Caco-2 (cell line): ENCODE measurements at regions of chr1 and their contacts with region 1.

Region 1: GRCh38 chr1:206912445-206913095 is 9.2 kb downstream of the FCMR start:
- DNase-seq: peak; percentile 82 to 83
- H3K4me3 ChIP-seq: no peak overlapping the region
- H3K4me3 Mint-ChIP-seq: no peak overlapping the region
- H3K27ac Mint-ChIP-seq: no peak overlapping the region
- H3K4me1 ChIP-seq: 0 out of 2 replicates have a peak, but pooled peaks cover 3% of the 10 kb centered on the region
- H3K4me1 Mint-ChIP-seq: peaks cover 12% of the 10 kb centered on the region
- H3K27me3 ChIP-seq: peaks cover 2% of the 10 kb centered on the region; the same call in 1 of the 2 replicates
- H3K27me3 Mint-ChIP-seq: peaks cover 20% of the 10 kb centered on the region
- CTCF ChIP-seq: peak; percentile 75 to 81

Region 2: GRCh38 chr1:206635080-206635977 is 277.2 kb before region 1 on chr1 and contains the start of gene DYRK3:
- CTCF ChIA-PET with region 1: interaction called, 9 read pairs
- POLR2A ChIA-PET with region 1: no interaction called
- intact Hi-C with region 1: loop called (anchors 1 kb)
- DNase-seq: peak; percentile 89 to 90
- H3K4me3 ChIP-seq: peak within 1 kb of the TSS; percentile 86
- H3K4me3 Mint-ChIP-seq: peak within 1 kb of the TSS; percentile 78
- H3K27ac Mint-ChIP-seq: peak within 1 kb of the TSS; percentile 74
- H3K4me1 ChIP-seq: no peaks in the 10 kb centered on the region
- H3K4me1 Mint-ChIP-seq: peaks cover 7% of the 10 kb centered on the region
- H3K27me3 ChIP-seq: no peaks in the 10 kb centered on the region; the same call in 1 of the 2 replicates
- H3K27me3 Mint-ChIP-seq: no peaks in the 10 kb centered on the region
- CTCF ChIP-seq: no peak
- total RNA-seq, gene DYRK3: 0.16 TPM in 1 of 2 replicates, not detected in the other

Region 3: GRCh38 chr1:206734499-206735142 is 177.9 kb before region 1 on chr1:
- CTCF ChIA-PET with region 1: interaction called, 22 read pairs
- POLR2A ChIA-PET with region 1: no interaction called
- intact Hi-C with region 1: loop called (anchors 1 kb)
- DNase-seq: peak in 1 of 2 experiments; percentile 75
- H3K4me3 ChIP-seq: no peak overlapping the region
- H3K4me3 Mint-ChIP-seq: no peak overlapping the region
- H3K27ac Mint-ChIP-seq: no peak overlapping the region
- H3K4me1 ChIP-seq: no peaks in the 10 kb centered on the region
- H3K4me1 Mint-ChIP-seq: peaks cover 21% of the 10 kb centered on the region
- H3K27me3 ChIP-seq: no peaks in the 10 kb centered on the region
- H3K27me3 Mint-ChIP-seq: no peaks in the 10 kb centered on the region
- CTCF ChIP-seq: peak; percentile 84 to 85

Region 4: GRCh38 chr1:206808615-206809014 is 104.0 kb before region 1 on chr1:
- CTCF ChIA-PET with region 1: interaction called, 22 read pairs
- POLR2A ChIA-PET with region 1: no interaction called
- intact Hi-C with region 1: loop called (anchors 1 kb)
- DNase-seq: peak; percentile 46 to 57
- H3K4me3 ChIP-seq: no peak overlapping the region
- H3K4me3 Mint-ChIP-seq: no peak overlapping the region
- H3K27ac Mint-ChIP-seq: no peak overlapping the region
- H3K4me1 ChIP-seq: no peaks in the 10 kb centered on the region
- H3K4me1 Mint-ChIP-seq: no peaks in the 10 kb centered on the region
- H3K27me3 ChIP-seq: no peaks in the 10 kb centered on the region
- H3K27me3 Mint-ChIP-seq: no peaks in the 10 kb centered on the region
- CTCF ChIP-seq: peak; percentile 48 to 59

Region 5: GRCh38 chr1:206828765-206829164 is 83.8 kb before region 1 on chr1:
- CTCF ChIA-PET with region 1: no interaction called
- POLR2A ChIA-PET with region 1: interaction called, 10 read pairs
- intact Hi-C with region 1: no loop called
- DNase-seq: no peak
- H3K4me3 ChIP-seq: no peak overlapping the region
- H3K4me3 Mint-ChIP-seq: no peak overlapping the region
- H3K27ac Mint-ChIP-seq: no peak overlapping the region
- H3K4me1 ChIP-seq: no peaks in the 10 kb centered on the region
- H3K4me1 Mint-ChIP-seq: no peaks in the 10 kb centered on the region
- H3K27me3 ChIP-seq: no peaks in the 10 kb centered on the region
- H3K27me3 Mint-ChIP-seq: peaks cover 10% of the 10 kb centered on the region
- CTCF ChIP-seq: no peak

Region 6: DNA sequence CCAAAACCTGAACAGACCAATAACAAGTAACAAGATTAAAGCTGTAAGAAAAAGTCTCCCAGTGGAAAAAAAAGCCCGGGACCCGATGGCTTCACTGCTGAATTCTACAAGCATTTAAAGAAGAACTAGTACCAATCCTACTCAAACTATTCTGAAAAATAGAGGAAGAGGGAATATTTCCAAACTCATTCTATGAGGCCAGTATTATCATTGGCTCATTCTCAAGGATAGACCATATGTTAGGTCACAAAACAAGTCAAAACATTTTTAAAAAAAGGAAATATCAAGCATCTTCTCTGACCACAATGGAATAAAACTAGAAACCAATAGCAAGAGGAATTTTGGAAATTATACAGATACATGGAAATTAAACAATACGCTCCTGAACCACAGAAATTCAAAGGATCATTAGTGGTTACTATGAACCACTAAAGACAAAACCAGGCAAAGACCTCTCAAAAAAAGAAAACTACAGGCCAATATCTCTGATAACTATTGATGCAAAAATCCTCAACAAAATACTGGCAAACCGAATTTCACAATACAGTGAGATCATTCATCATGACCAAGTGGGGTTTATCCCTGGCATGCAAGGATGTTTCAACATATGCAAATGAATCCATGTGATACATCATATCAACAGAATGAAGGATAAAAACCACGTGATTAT is 61.1 kb before region 1 on chr1:
- CTCF ChIA-PET with region 1: interaction called, 6 read pairs
- POLR2A ChIA-PET with region 1: no interaction called
- intact Hi-C with region 1: loop called (anchors 5 kb)
- DNase-seq: no peak
- H3K4me3 ChIP-seq: no peak overlapping the region
- H3K4me3 Mint-ChIP-seq: no peak overlapping the region
- H3K27ac Mint-ChIP-seq: no peak overlapping the region
- H3K4me1 ChIP-seq: peaks cover 10% of the 10 kb centered on the region
- H3K4me1 Mint-ChIP-seq: peaks cover 6% of the 10 kb centered on the region
- H3K27me3 ChIP-seq: no peaks in the 10 kb centered on the region
- H3K27me3 Mint-ChIP-seq: peaks cover 17% of the 10 kb centered on the region
- CTCF ChIP-seq: no peak

Region 7: DNA sequence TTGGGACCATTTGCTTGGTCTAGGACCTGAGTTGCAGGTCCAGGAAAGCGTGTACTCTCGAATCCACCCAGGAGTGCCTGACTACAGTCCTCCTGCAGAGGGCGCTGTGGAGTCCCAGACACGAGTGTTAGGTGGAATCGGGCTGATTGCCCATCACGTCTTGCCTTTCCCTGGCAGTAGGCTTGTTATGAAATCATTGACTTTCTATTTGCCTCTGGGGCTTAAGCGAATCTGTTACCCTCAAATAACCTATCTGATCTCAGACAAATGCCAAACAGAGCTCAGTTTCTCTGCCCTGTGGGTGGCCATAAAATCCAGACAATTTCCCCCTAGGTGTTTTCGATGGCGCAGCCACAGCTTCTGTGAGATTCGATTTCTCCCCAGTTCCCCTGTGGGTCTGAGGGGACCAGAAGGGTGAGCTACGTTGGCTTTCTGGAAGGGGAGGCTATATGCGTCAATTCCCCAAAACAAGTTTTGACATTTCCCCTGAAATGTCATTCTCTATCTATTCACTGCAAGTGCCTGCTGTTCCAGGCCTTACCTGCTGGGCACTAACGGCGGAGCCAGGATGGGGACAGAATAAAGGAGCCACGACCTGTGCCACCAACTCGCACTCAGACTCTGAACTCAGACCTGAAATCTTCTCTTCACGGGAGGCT is 47.4 kb before region 1 on chr1 and contains the start of gene IL20:
- CTCF ChIA-PET with region 1: interaction called, 7 read pairs
- POLR2A ChIA-PET with region 1: no interaction called
- intact Hi-C with region 1: loop called (anchors 5 kb)
- DNase-seq: peak; percentile 65 to 73
- H3K4me3 ChIP-seq: no peak within 1 kb of the TSS
- H3K4me3 Mint-ChIP-seq: no peak within 1 kb of the TSS
- H3K27ac Mint-ChIP-seq: no peak within 1 kb of the TSS
- H3K4me1 ChIP-seq: no peaks in the 10 kb centered on the region
- H3K4me1 Mint-ChIP-seq: no peaks in the 10 kb centered on the region
- H3K27me3 ChIP-seq: no peaks in the 10 kb centered on the region
- H3K27me3 Mint-ChIP-seq: peaks cover 15% of the 10 kb centered on the region
- CTCF ChIP-seq: peak; percentile 71 to 73
- total RNA-seq, gene IL20: not detected in 2 replicates

Region 8: DNA sequence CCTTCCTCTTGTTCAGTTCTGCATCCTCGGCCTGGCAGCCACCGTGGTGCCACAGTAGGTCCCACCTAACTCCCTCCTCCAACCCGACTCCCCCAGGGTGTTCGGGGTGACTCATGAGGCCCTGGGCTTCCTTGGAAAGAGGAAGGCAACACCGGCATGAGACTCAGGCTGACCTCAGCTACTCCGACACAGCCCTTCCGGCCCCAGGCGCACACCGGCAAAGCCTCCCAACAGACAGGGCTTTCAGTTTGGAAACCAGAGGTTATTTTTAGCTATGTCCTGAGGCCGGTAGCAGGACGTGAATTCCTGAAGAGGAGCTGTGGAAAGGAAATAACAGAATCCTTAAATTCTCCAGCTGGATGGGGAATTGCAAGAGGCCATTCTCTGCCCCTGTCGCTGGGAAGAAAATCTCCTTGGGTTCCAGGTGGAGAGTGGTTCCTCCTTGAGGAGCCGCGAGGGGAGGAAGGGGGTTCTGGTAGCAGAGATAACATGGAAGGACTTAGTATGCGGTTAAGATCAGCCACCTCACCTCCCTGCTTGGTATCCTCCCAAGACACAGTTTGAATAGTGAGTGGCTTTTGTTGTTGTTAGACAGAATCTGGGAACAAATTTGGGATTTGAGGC is 1307.2 kb after region 1 on chr1:
- CTCF ChIA-PET with region 1: no interaction called
- POLR2A ChIA-PET with region 1: no interaction called
- intact Hi-C with region 1: no loop called
- DNase-seq: peak in 1 of 2 experiments; percentile 48
- H3K4me3 ChIP-seq: no peak overlapping the region
- H3K4me3 Mint-ChIP-seq: no peak overlapping the region
- H3K27ac Mint-ChIP-seq: no peak overlapping the region
- H3K4me1 ChIP-seq: peaks cover 3% of the 10 kb centered on the region; the same call in 1 of the 2 replicates
- H3K4me1 Mint-ChIP-seq: peaks cover 21% of the 10 kb centered on the region
- H3K27me3 ChIP-seq: no peaks in the 10 kb centered on the region
- H3K27me3 Mint-ChIP-seq: no peaks in the 10 kb centered on the region
- CTCF ChIP-seq: no peak